ENCODE measurements at regions of chr12 and their contacts with region 1.

Region 1: DNA sequence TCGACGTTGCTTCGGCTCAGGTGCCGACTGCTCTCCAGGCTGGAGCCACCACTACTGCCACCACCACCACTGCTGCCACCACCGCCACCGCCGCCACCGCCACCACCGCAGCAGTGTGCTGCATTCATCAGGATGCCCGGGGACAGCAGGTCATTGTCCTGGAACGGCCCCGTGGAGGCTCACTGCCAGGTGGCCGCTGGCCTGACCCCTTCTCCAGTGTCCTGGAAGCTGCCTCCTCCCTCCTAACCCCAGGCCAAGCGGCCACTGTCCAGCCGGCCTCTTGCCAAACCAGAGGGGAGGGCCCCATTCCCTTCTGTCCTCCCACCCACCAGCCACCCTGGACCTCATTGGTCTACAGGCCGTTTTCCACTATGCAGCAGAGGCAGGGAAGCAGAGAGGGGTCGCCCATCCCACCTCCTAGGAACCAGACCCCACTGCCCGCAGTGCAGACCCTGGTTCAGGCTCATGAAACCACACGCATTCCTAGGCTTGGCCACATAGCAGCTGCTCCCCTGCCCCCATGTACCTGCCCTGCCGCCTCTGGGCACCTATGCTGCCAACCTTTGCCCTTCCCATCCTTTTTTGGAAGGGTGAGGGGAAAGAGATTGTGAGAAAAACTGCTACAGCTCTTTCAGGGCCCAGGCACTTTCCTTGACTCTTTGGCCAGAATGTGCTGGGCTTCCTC is 15.2 kb downstream of the ARL6IP4 start:
- DNase-seq: no peak
- ATAC-seq: no peak
- H3K4me3 Mint-ChIP-seq: no peak overlapping the region
- H3K27ac Mint-ChIP-seq: no peak overlapping the region
- H3K4me1 Mint-ChIP-seq: peaks cover 6% of the 10 kb centered on the region
- H3K27me3 Mint-ChIP-seq: no peaks in the 10 kb centered on the region

Region 2: GRCh38 chr12:122963953-122964301 is 31.7 kb before region 1 on chr12:
- CTCF ChIA-PET with region 1: no interaction called
- POLR2A ChIA-PET with region 1: no interaction called
- intact Hi-C with region 1: no loop called
- DNase-seq: no peak
- ATAC-seq: no peak
- H3K4me3 Mint-ChIP-seq: no peak overlapping the region
- H3K27ac Mint-ChIP-seq: no peak overlapping the region
- H3K4me1 Mint-ChIP-seq: peaks cover 2% of the 10 kb centered on the region
- H3K27me3 Mint-ChIP-seq: no peaks in the 10 kb centered on the region

Region 3: DNA sequence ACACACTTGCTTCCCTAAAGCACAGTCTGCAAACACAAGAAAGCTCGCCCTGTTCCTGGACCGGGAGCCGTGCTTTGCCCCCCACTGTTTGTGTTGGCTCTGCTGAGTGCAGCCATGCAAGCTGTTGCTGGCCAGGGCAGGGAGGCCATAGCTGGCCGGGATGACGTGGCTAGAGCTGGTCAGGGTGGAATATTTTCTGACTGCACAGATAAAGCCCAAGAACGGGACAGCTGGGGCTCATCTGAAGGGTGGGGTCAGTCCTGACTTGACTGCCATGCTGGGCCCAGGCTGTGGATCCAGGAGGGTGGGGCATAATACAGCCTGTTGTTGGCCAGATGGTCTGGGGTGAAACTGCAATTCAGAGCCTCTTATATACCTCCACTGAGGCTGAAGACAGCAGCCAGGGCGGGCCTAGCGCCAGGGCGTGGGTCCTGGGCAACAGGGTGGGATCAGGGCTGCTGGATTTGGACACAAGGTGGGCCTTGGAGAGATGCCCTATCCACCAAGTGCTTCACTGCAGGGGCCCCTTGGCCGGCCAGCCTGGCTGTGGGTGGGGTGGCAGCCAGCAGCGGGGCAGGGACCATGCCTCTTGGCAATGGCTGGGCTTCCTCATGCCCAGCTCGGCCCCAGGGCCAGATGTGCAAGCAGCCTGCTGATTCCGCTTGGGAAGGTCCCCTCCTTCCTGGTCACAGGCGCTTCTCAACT is 403.1 kb after region 1 on chr12:
- CTCF ChIA-PET with region 1: no interaction called
- POLR2A ChIA-PET with region 1: no interaction called
- intact Hi-C with region 1: no loop called
- DNase-seq: no peak
- ATAC-seq: no peak
- H3K4me3 Mint-ChIP-seq: no peak overlapping the region
- H3K27ac Mint-ChIP-seq: no peak overlapping the region
- H3K4me1 Mint-ChIP-seq: peaks cover 3% of the 10 kb centered on the region
- H3K27me3 Mint-ChIP-seq: no peaks in the 10 kb centered on the region

Region 4: DNA sequence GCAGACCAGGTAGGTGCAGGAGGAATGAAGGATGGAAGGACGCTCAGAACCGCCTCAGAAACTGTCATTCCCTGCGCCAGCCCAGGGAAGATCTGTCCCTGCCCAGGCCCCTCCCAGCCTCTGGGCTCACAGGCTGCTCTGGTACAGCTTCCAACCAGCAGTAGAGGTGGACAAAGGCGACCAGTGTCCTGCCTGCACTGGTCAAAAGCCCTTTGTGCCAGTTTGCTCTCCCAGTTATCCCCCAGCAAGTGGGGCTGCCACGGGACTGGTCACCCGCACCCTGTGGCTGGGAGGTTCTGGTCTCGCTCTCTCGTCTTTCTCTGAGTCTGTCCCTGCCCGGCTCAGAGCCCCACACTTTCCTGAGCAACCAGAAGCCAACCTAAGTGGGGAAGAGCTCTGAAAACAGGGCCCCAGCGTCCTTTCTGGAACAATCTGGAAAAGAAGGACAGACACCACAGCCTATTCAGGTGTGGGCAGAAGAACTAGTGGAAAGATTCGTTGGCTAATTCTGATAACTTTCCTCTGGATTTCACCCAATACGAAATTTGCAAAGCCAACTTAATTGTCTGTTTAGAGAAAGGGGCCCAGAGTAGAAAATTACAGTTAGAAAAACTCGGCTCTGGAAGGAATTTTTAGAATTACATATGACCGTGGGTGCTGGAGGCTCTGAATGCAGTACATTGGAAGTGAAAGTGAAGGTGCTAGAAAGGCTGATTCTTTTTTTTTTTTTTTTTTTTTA is 484.0 kb after region 1 on chr12:
- CTCF ChIA-PET with region 1: no interaction called
- POLR2A ChIA-PET with region 1: no interaction called
- intact Hi-C with region 1: loop called in 1 of 2 experiments (anchors 10 kb)
- DNase-seq: no peak
- ATAC-seq: no peak
- H3K4me3 Mint-ChIP-seq: no peak overlapping the region
- H3K27ac Mint-ChIP-seq: no peak overlapping the region
- H3K4me1 Mint-ChIP-seq: peaks cover 25% of the 10 kb centered on the region
- H3K27me3 Mint-ChIP-seq: no peaks in the 10 kb centered on the region